Sigmoid colon (tissue), 7 donors: ENCODE measurements at regions of chr12 and their contacts with region 1.

Region 1: GRCh38 chr12:123580772-123581171 is 3.6 kb upstream of the TMED2 start:
- DNase-seq: no peak
- H3K4me3 ChIP-seq: no peak overlapping the region
- H3K27ac ChIP-seq: no peak overlapping the region
- H3K4me1 ChIP-seq: peaks cover 0 to 27% (median 26%) of the 10 kb centered on the region in 4 donors
- H3K27me3 ChIP-seq: no peaks in the 10 kb centered on the region
- CTCF ChIP-seq: no peak
- EP300 ChIP-seq: no peak
- POLR2A ChIP-seq: no peak

Region 2: DNA sequence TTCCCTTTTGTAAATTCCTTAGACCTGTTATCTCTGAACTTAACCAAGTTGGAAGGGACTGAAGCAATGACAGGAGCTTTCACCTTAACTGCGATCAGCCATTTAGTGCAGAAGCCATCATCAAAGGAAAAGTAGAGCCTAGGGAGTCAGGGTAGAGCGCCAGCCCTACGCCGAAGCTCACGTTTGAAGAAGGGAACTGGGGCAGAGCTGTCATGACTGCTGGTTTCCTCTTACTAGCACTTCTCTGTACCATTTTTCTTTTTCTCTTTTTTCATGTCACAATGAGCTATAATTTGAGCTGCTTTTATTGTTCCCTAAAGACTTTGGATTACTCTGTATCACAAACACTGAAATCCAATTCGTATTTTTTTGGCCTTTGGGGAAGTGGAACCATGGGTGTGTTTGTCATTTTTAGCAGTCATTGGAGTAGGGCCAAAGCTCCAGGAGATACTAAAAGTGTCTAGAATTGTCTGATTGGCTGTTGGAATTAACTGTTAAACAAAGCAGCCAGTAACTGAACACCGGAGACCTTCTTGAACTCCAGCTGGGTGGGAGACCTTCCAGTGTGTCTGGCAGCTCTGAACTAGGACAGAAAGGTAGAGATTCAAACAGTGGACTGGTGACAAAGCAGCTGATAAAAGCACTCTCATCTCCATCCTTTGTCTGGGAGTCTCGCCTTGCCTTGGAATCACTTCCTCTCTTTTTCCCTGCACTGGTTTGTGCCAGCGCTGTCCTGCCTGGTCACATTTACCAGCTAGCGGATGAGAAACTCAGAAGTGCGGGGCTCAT is 338.5 kb before region 1 on chr12:
- intact Hi-C with region 1: no loop called
- DNase-seq: no peak
- H3K4me3 ChIP-seq: no peak overlapping the region
- H3K27ac ChIP-seq: peak overlapping the region; percentile 10 to 32 (median 22)
- H3K4me1 ChIP-seq: peaks cover 0 to 34% (median 19%) of the 10 kb centered on the region in 4 donors
- H3K27me3 ChIP-seq: no peaks in the 10 kb centered on the region
- CTCF ChIP-seq: no peak
- EP300 ChIP-seq: no peak
- POLR2A ChIP-seq: no peak

Region 3: DNA sequence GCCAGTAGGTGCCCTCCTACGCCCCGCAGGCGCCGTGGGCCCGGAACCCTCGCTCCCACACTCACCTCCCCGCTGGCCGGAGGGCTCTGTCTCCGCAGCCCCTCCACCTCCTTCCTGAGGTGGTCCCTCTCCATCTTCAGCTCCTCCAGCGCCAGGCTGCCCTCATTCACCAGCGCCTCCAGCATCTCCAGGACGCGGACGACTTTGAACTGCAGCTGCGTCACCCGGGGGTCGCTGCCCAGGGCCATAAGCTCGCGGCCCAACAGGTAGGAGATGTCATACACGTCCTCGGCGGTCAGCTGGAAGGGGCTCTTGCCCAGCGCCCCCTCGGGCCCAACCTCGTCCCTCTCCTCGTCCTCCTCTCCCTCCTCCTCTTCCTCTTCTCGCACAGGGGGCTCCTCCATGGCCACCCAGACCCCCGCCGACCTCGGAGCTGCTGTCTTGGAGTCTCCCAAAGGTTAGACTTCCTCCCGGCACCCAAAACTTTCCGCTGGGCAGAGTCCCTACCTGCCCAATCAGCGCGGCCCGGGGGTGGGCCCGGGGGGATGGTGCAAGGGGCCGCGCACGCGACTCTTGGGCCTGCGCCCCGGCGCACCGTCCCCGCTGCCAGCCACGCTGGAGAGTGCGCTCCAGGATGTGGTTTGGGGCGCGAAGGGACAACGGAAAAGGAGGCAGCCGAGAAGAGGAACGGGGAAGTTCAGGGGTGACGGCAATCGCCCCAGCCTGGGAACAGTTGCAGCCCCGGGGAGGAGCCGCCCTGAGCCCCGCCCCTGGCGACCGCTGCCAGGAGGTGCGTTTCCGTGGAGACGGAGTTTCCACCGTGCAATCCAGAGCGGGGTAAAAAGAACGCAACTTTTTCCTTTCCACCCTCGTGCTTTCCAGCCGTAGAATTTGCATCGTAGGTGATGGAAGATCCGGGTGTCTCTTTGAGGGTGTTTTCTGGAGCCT is 144.5 kb before region 1 on chr12 and contains the start of gene RILPL2:
- intact Hi-C with region 1: loop called (anchors 5 kb)
- DNase-seq: peak; percentile 95
- H3K4me3 ChIP-seq: peak within 1 kb of the TSS; percentile 68 to 89 (median 74)
- H3K27ac ChIP-seq: peak within 1 kb of the TSS; percentile 74 to 82 (median 78)
- H3K4me1 ChIP-seq: peaks cover 0 to 43% (median 31%) of the 10 kb centered on the region in 4 donors
- H3K27me3 ChIP-seq: no peaks in the 10 kb centered on the region
- CTCF ChIP-seq: no peak
- EP300 ChIP-seq: no peak
- POLR2A ChIP-seq: peak in 1 of 2 donors; percentile 39
- total RNA-seq, gene RILPL2: 4.3 to 6.4 (median 5.5) TPM

Region 4: GRCh38 chr12:123457980-123458783 is 122.6 kb before region 1 on chr12 and contains the start of gene SNRNP35:
- intact Hi-C with region 1: loop called (anchors 5 kb)
- DNase-seq: peak; percentile 89
- H3K4me3 ChIP-seq: peak within 1 kb of the TSS; percentile 58 to 76 (median 72)
- H3K27ac ChIP-seq: peak within 1 kb of the TSS; percentile 95 to 97 (median 96)
- H3K4me1 ChIP-seq: peaks cover 0 to 15% (median 12%) of the 10 kb centered on the region in 4 donors
- H3K27me3 ChIP-seq: no peaks in the 10 kb centered on the region
- CTCF ChIP-seq: no peak
- EP300 ChIP-seq: no peak
- POLR2A ChIP-seq: no peak
- total RNA-seq, gene SNRNP35: 11.0 to 21.6 (median 15.2) TPM

Region 5: GRCh38 chr12:123633379-123634141 is 52.8 kb after region 1 on chr12 and contains the starts of genes EIF2B1 and GTF2H3:
- intact Hi-C with region 1: loop called (anchors 5 kb)
- DNase-seq: peak; percentile 98
- H3K4me3 ChIP-seq: peak within 1 kb of the TSS; percentile 77 to 91 (median 84)
- H3K27ac ChIP-seq: peak within 1 kb of the TSS; percentile 81 to 92 (median 84)
- H3K4me1 ChIP-seq: peaks cover 0 to 23% (median 14%) of the 10 kb centered on the region in 4 donors
- H3K27me3 ChIP-seq: no peaks in the 10 kb centered on the region
- CTCF ChIP-seq: no peak
- EP300 ChIP-seq: peak in 1 of 4 donors; percentile 43
- POLR2A ChIP-seq: peak; percentile 58 to 59
- total RNA-seq, gene EIF2B1: 102 to 155 (median 109) TPM
- total RNA-seq, gene GTF2H3: 16.4 to 20.8 (median 19.3) TPM

Region 6: GRCh38 chr12:123659996-123660727 is 79.4 kb after region 1 on chr12:
- intact Hi-C with region 1: no loop called
- DNase-seq: no peak
- H3K4me3 ChIP-seq: no peak overlapping the region
- H3K27ac ChIP-seq: no peak overlapping the region
- H3K4me1 ChIP-seq: no peaks in the 10 kb centered on the region
- H3K27me3 ChIP-seq: no peaks in the 10 kb centered on the region
- CTCF ChIP-seq: no peak
- EP300 ChIP-seq: no peak
- POLR2A ChIP-seq: no peak

Region 7: GRCh38 chr12:123670882-123671728 is 90.3 kb after region 1 on chr12 and contains the start of gene TCTN2:
- intact Hi-C with region 1: no loop called
- DNase-seq: peak; percentile 98
- H3K4me3 ChIP-seq: peak within 1 kb of the TSS; percentile 81 to 95 (median 88)
- H3K27ac ChIP-seq: peak within 1 kb of the TSS; percentile 51 to 70 (median 61)
- H3K4me1 ChIP-seq: peaks cover 0 to 19% (median 10%) of the 10 kb centered on the region in 4 donors
- H3K27me3 ChIP-seq: no peaks in the 10 kb centered on the region
- CTCF ChIP-seq: no peak
- EP300 ChIP-seq: no peak
- POLR2A ChIP-seq: no peak
- total RNA-seq, gene TCTN2: 4.6 to 11.6 (median 8.1) TPM